ENCODE measurements at regions of chr12 and their contacts with region 1.

Region 1: GRCh38 chr12:57520053-57520871 is at the start of gene DDIT3:
- DNase-seq: peak; percentile 99
- ATAC-seq: peak; percentile 78
- H3K4me3 Mint-ChIP-seq: peak within 1 kb of the TSS; percentile 95
- H3K27ac Mint-ChIP-seq: peak within 1 kb of the TSS; percentile 99
- H3K4me1 Mint-ChIP-seq: peaks cover 66% of the 10 kb centered on the region
- H3K27me3 Mint-ChIP-seq: no peaks in the 10 kb centered on the region
- CTCF ChIP-seq: no peak
- total RNA-seq, gene DDIT3: 28.0 TPM

Region 2: DNA sequence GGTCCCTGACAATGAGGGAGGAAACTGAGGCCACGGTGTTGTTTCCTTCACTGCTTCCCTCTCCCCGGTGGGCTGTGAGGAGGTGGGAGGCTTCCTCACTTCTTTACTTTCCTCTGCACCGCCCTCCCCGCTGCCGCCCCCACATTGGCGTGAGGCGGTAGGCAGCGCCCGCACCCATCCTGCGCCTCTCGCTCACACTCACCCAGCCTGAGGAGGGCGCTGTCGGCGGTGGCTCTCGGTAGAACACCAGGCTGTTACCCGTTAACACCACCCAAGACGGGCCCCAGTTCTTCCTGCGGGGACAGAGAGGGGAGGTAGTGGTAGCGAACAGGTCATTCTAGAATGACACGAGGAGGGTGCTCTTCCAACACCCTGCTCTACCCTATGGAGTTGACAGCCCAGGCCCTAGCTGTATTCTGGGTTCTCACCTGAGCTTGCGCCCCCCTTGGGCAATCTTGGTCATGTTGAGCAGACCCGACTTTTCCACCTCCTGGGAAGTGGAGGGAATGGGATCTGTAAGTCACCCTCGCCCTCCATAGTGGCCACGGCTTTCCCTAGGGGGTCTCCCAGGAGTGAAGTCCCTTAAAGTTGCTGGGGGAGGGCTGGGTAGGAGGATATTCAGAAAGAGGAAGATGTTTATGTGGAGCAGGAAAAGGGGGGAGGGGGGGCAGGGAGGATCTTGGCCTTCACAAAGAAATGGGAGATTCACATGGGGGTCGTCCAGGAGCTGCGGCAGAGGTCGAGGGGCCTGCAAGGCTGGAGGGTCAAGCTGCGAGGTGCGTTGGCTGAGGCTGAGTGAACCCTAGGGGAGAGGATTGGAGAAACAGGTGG is 43.9 kb before region 1 on chr12:
- CTCF ChIA-PET with region 1: interaction called, 7 read pairs
- POLR2A ChIA-PET with region 1: interaction called, 32 read pairs
- intact Hi-C with region 1: loop called (anchors 5 kb)
- DNase-seq: peak; percentile 93
- ATAC-seq: peak; percentile 67
- H3K4me3 Mint-ChIP-seq: peak overlapping the region; percentile 89
- H3K27ac Mint-ChIP-seq: peak overlapping the region; percentile 99
- H3K4me1 Mint-ChIP-seq: peaks cover 58% of the 10 kb centered on the region
- H3K27me3 Mint-ChIP-seq: no peaks in the 10 kb centered on the region
- CTCF ChIP-seq: peak; percentile 95

Region 3: DNA sequence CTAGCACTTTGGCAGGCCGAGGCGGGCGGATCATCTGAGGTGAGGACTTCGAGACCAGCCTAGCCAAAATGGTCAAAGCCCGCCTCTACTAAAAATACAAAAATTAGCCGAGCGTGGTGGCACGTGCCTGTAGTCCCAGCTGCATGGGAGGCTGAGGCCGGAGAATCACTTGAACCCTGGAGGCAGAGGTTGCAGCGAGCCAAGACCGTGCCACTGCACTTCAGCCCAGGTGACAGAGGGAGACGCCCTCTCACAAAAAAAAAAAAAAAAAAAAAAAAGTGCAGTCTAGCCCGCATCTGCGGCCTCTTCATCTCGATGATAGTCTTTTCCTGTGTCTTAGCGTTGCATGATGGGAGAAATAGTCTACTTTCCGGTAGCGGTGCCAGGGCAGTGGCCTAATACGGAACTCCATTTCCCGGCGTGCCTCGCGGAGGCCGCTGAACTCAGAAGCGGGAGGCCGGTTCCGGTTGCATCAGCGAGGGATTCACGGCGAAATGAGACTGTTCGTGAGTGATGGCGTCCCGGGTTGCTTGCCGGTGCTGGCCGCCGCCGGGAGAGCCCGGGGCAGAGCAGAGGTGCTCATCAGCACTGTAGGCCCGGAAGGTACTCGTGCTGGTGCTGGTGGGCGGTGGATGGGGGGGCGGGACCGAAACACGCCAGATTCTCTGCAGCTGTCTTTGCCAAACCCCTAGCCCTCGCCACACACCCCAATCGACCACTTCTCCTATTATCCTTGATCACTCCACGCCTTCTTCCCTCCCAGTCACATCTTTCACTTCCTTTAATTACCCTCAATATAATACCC is 32.5 kb before region 1 on chr12 and contains the start of gene MARS1:
- CTCF ChIA-PET with region 1: interaction called, 3 read pairs
- POLR2A ChIA-PET with region 1: interaction called, 50 read pairs
- intact Hi-C with region 1: no loop called
- DNase-seq: peak; percentile 97
- ATAC-seq: peak; percentile 98
- H3K4me3 Mint-ChIP-seq: peak within 1 kb of the TSS; percentile 97
- H3K27ac Mint-ChIP-seq: peak within 1 kb of the TSS; percentile 95
- H3K4me1 Mint-ChIP-seq: peaks cover 33% of the 10 kb centered on the region
- H3K27me3 Mint-ChIP-seq: no peaks in the 10 kb centered on the region
- CTCF ChIP-seq: no peak
- total RNA-seq, gene MARS1: 343 to 345 TPM

Region 4: GRCh38 chr12:57535764-57536596 is 15.7 kb after region 1 on chr12:
- CTCF ChIA-PET with region 1: interaction called, 3 read pairs
- POLR2A ChIA-PET with region 1: interaction called, 46 read pairs
- intact Hi-C with region 1: no loop called
- DNase-seq: no peak
- ATAC-seq: no peak
- H3K4me3 Mint-ChIP-seq: no peak overlapping the region
- H3K27ac Mint-ChIP-seq: no peak overlapping the region
- H3K4me1 Mint-ChIP-seq: peaks cover 3% of the 10 kb centered on the region
- H3K27me3 Mint-ChIP-seq: no peaks in the 10 kb centered on the region
- CTCF ChIP-seq: no peak

Region 5: DNA sequence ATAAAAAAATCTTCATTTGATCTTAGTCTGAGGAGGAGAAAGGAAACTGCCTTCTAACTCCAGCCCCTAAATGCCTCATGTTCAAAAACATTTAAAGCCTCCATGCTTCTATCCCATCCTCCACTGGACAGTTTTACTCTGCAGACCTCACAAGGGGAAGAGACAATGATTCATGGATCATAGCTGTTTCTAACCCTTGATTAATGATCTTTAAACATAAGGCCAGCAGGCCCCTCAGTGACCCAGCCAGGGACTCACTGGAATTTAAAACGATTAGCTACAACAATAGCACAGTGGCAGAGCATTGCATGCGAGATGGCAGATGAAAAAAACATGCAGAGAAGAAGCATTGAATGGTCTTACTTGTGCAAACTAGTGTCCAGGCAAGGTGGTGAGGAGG is 20.7 kb after region 1 on chr12:
- CTCF ChIA-PET with region 1: interaction called, 3 read pairs
- POLR2A ChIA-PET with region 1: interaction called, 46 read pairs
- intact Hi-C with region 1: no loop called
- DNase-seq: no peak
- ATAC-seq: no peak
- H3K4me3 Mint-ChIP-seq: no peak overlapping the region
- H3K27ac Mint-ChIP-seq: no peak overlapping the region
- H3K4me1 Mint-ChIP-seq: peaks cover 26% of the 10 kb centered on the region
- H3K27me3 Mint-ChIP-seq: no peaks in the 10 kb centered on the region
- CTCF ChIP-seq: no peak

Measured in activated CD8-positive, alpha-beta T cell treated with anti-CD3 and anti-CD28 coated beads for 36 hours (primary cell).